Calu3 (cell line): ENCODE measurements at regions of chr18 and their contacts with region 1.

Region 1: GRCh38 chr18:43422518-43422917 is 145.2 kb upstream of the SYT4 start:
- DNase-seq: no peak
- H3K4me3 Mint-ChIP-seq: no peak overlapping the region
- H3K27ac Mint-ChIP-seq: no peak overlapping the region
- H3K4me1 Mint-ChIP-seq: no peaks in the 10 kb centered on the region
- H3K27me3 Mint-ChIP-seq: peaks cover 12% of the 10 kb centered on the region
- CTCF ChIP-seq: no peak

Region 2: DNA sequence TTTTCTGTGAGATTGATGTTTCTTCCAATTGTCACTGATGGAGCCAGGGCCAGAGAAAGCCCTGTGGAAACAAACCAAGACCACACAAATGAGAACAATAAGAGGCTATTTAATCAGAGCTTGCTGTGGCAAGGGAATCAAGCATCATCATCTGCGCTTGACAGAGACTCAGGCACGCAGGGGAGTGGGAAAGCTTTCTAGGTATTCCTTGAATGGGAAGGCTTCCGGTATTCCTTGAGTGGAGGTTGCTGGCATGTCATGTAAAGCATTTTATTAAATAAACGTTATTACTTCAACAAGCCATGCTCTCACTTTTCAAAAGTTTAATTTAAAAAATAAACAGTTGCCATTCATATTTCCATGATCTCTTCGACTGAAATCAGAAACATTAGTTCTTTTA is 49.4 kb after region 1 on chr18:
- CTCF ChIA-PET with region 1: no interaction called
- intact Hi-C with region 1: loop called (anchors 5 kb)
- DNase-seq: no peak
- H3K4me3 Mint-ChIP-seq: no peak overlapping the region
- H3K27ac Mint-ChIP-seq: no peak overlapping the region
- H3K4me1 Mint-ChIP-seq: no peaks in the 10 kb centered on the region
- H3K27me3 Mint-ChIP-seq: no peaks in the 10 kb centered on the region
- CTCF ChIP-seq: no peak

Region 3: DNA sequence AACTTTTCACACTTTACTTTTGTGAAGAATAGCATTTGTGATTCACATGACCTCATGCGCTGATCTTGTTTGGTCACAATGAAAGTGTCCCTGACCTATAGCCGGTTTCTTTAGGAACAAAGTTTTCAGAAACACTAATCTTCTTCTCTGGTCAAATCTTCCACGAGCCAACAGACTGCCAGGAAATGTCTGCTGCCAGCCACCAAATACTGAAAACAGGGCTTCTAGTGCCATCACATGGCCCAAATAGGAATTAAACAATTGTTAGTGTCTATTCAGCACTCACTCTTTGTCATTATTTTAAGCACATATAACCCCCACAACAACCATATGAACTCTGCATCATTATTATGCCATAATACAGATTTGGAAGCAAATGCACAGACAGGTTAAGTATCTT is 141.3 kb after region 1 on chr18:
- CTCF ChIA-PET with region 1: no interaction called
- intact Hi-C with region 1: loop called (anchors 5 kb)
- DNase-seq: peak; percentile 51
- H3K4me3 Mint-ChIP-seq: no peak overlapping the region
- H3K27ac Mint-ChIP-seq: no peak overlapping the region
- H3K4me1 Mint-ChIP-seq: peaks cover 10% of the 10 kb centered on the region
- H3K27me3 Mint-ChIP-seq: peaks cover 19% of the 10 kb centered on the region
- CTCF ChIP-seq: peak; percentile 47

Region 4: GRCh38 chr18:43587538-43588153 is 165.1 kb after region 1 on chr18:
- CTCF ChIA-PET with region 1: no interaction called
- intact Hi-C with region 1: loop called (anchors 5 kb)
- DNase-seq: peak; percentile 7
- H3K4me3 Mint-ChIP-seq: no peak overlapping the region
- H3K27ac Mint-ChIP-seq: no peak overlapping the region
- H3K4me1 Mint-ChIP-seq: no peaks in the 10 kb centered on the region
- H3K27me3 Mint-ChIP-seq: no peaks in the 10 kb centered on the region
- CTCF ChIP-seq: peak; percentile 65